PC-9 (cell line): ENCODE measurements at regions of chr5 and their contacts with region 1.

Region 1: GRCh38 chr5:35926389-35927051 is 11.9 kb downstream of the CAPSL start:
- DNase-seq: peak in 1 of 2 experiments; percentile 58
- H3K4me3 ChIP-seq: no peak overlapping the region
- H3K27ac ChIP-seq: no peak overlapping the region
- H3K4me1 ChIP-seq: no peaks in the 10 kb centered on the region
- H3K27me3 ChIP-seq: peaks cover 54% of the 10 kb centered on the region
- CTCF ChIP-seq: peak; percentile 99

Region 2: GRCh38 chr5:34915139-34915855 is 1011.2 kb before region 1 on chr5 and contains the starts of genes BRIX1 and RAD1:
- CTCF ChIA-PET with region 1: interaction called, 3 read pairs
- POLR2A ChIA-PET with region 1: no interaction called
- intact Hi-C with region 1: loop called (anchors 10 kb)
- DNase-seq: peak; percentile 95 to 100
- H3K4me3 ChIP-seq: peak within 1 kb of the TSS; percentile 81
- H3K27ac ChIP-seq: peak within 1 kb of the TSS; percentile 73
- H3K4me1 ChIP-seq: peaks cover 42% of the 10 kb centered on the region
- H3K27me3 ChIP-seq: no peaks in the 10 kb centered on the region
- CTCF ChIP-seq: 0 out of 2 replicates have a peak, but pooled peaks have one; percentile 39
- total RNA-seq, gene BRIX1: 71.9 and 73.4 TPM in 2 replicates
- total RNA-seq, gene RAD1: 43.8 and 63.0 TPM in 2 replicates

Region 3: GRCh38 chr5:35538198-35538931 is 388.2 kb before region 1 on chr5:
- CTCF ChIA-PET with region 1: no interaction called
- POLR2A ChIA-PET with region 1: no interaction called
- intact Hi-C with region 1: loop called (anchors 10 kb)
- DNase-seq: no peak
- H3K4me3 ChIP-seq: no peak overlapping the region
- H3K27ac ChIP-seq: no peak overlapping the region
- H3K4me1 ChIP-seq: no peaks in the 10 kb centered on the region
- H3K27me3 ChIP-seq: peaks cover 25% of the 10 kb centered on the region
- CTCF ChIP-seq: no peak

Region 4: DNA sequence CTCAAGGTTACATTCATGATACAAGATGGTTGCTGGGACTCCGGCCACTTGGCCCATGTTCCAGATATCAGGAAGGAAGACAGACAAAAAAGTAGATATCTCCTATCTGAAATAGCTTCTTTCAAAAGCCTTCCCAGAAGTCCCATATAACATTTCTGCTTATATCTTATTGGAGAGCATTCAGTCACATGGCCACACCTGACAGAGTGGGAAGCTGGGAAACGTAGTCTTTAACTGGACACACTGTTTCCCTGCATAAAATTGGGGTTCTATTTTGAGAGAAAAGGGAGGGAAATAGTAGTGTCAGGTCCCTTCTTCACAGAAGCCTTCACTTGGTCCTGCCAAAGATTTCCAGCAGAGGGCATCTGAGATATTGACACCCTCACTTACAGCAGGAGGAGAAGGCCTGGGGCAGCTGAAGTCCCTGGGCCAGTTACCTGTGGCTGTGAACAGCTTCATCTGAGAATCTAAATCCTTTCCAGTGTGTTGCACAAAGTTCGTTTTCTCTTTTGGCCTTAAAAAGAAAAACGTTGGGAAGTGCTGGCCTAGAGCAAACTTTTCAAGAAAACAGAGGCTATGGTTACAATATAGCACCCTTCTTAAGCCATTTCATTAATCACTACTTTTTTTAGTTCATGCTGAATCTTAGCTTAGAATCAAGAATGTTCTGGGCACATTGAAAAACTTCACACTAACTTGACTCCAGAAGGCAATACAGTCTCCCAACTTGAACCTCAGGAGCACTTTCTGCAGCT is 275.3 kb before region 1 on chr5:
- CTCF ChIA-PET with region 1: interaction called, 6 read pairs
- POLR2A ChIA-PET with region 1: no interaction called
- intact Hi-C with region 1: loop called (anchors 1 kb)
- DNase-seq: peak; percentile 29 to 43
- H3K4me3 ChIP-seq: no peak overlapping the region
- H3K27ac ChIP-seq: no peak overlapping the region
- H3K4me1 ChIP-seq: no peaks in the 10 kb centered on the region
- H3K27me3 ChIP-seq: no peaks in the 10 kb centered on the region
- CTCF ChIP-seq: peak; percentile 70

Region 5: GRCh38 chr5:35887321-35888100 is 39.0 kb before region 1 on chr5:
- CTCF ChIA-PET with region 1: no interaction called
- POLR2A ChIA-PET with region 1: no interaction called
- intact Hi-C with region 1: no loop called
- DNase-seq: no peak
- H3K4me3 ChIP-seq: no peak overlapping the region
- H3K27ac ChIP-seq: no peak overlapping the region
- H3K4me1 ChIP-seq: peaks cover 46% of the 10 kb centered on the region
- H3K27me3 ChIP-seq: no peaks in the 10 kb centered on the region
- CTCF ChIP-seq: no peak

Region 6: GRCh38 chr5:35899800-35900199 is 26.7 kb before region 1 on chr5:
- CTCF ChIA-PET with region 1: interaction called, 12 read pairs
- POLR2A ChIA-PET with region 1: no interaction called
- intact Hi-C with region 1: no loop called
- DNase-seq: no peak
- H3K4me3 ChIP-seq: no peak overlapping the region
- H3K27ac ChIP-seq: no peak overlapping the region
- H3K4me1 ChIP-seq: no peaks in the 10 kb centered on the region
- H3K27me3 ChIP-seq: no peaks in the 10 kb centered on the region
- CTCF ChIP-seq: no peak

Region 7: GRCh38 chr5:36305571-36306326 is 379.2 kb after region 1 on chr5:
- CTCF ChIA-PET with region 1: no interaction called
- POLR2A ChIA-PET with region 1: no interaction called
- intact Hi-C with region 1: no loop called
- DNase-seq: peak; percentile 48 to 52
- H3K4me3 ChIP-seq: no peak overlapping the region
- H3K27ac ChIP-seq: no peak overlapping the region
- H3K4me1 ChIP-seq: 0 out of 2 replicates have a peak, but pooled peaks cover 4% of the 10 kb centered on the region
- H3K27me3 ChIP-seq: no peaks in the 10 kb centered on the region
- CTCF ChIP-seq: peak; percentile 83